SK-N-SH (cell line): ENCODE measurements at regions of chr7 and their contacts with region 1.

Region 1: GRCh38 chr7:157228864-157229422 is 90.2 kb downstream of the UBE3C start:
- DNase-seq: peak; percentile 53
- H3K4me3 ChIP-seq: no peak overlapping the region
- H3K27ac ChIP-seq: no peak overlapping the region
- H3K4me1 ChIP-seq: peaks cover 0 to 6% of the 10 kb centered on the region in 2 experiments; a peak in 2 of 4 replicates
- H3K27me3 ChIP-seq: no peaks in the 10 kb centered on the region
- CTCF ChIP-seq: peak; percentile 57
- EP300 ChIP-seq: no peak
- RAD21 ChIP-seq: peak; percentile 66

Region 2: GRCh38 chr7:156892821-156893706 is 335.9 kb before region 1 on chr7 and contains the start of gene LMBR1:
- CTCF ChIA-PET with region 1: no interaction called
- POLR2A ChIA-PET with region 1: no interaction called
- DNase-seq: peak; percentile 100
- H3K4me3 ChIP-seq: peak within 1 kb of the TSS; percentile 82 to 98
- H3K27ac ChIP-seq: peak within 1 kb of the TSS; percentile 61 to 87
- H3K4me1 ChIP-seq: peaks cover 6 to 9% of the 10 kb centered on the region in 2 experiments; a peak in 3 of 4 replicates
- H3K27me3 ChIP-seq: no peaks in the 10 kb centered on the region
- CTCF ChIP-seq: peak; percentile 64
- EP300 ChIP-seq: no peak
- RAD21 ChIP-seq: no peak
- polyA plus RNA-seq, gene LMBR1: 20.0 and 24.6 TPM in 2 replicates

Region 3: GRCh38 chr7:156964971-156965370 is 264.0 kb before region 1 on chr7:
- CTCF ChIA-PET with region 1: interaction called, 50 read pairs
- POLR2A ChIA-PET with region 1: no interaction called
- DNase-seq: no peak
- H3K4me3 ChIP-seq: no peak overlapping the region
- H3K27ac ChIP-seq: no peak overlapping the region
- H3K4me1 ChIP-seq: no peaks in the 10 kb centered on the region
- H3K27me3 ChIP-seq: no peaks in the 10 kb centered on the region
- CTCF ChIP-seq: no peak
- EP300 ChIP-seq: no peak
- RAD21 ChIP-seq: no peak

Region 4: DNA sequence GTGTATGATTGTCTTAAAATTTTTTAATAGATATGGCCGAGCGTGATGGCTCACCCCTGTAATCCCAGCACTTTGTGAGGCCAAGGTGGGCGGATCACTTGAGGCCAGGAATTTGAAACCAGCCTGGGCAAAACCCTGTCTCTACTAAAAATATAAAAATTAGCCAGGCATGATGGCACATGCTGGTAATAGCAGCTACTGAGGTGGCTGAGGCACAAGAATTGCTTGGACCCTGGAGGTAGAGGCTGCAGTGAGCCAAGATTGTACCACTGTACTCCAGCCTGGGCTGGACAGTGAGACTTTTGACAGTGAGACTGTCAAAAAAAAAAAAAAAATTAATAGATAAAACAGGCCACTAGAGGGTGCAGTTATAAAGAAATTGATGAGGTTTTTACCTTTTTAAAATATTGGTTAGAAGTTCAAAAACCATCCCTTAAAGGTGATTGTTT is 258.9 kb before region 1 on chr7:
- CTCF ChIA-PET with region 1: interaction called, 50 read pairs
- POLR2A ChIA-PET with region 1: no interaction called
- DNase-seq: no peak
- H3K4me3 ChIP-seq: no peak overlapping the region
- H3K27ac ChIP-seq: no peak overlapping the region
- H3K4me1 ChIP-seq: no peaks in the 10 kb centered on the region
- H3K27me3 ChIP-seq: no peaks in the 10 kb centered on the region
- CTCF ChIP-seq: peak; percentile 74
- EP300 ChIP-seq: no peak
- RAD21 ChIP-seq: peak; percentile 56

Region 5: GRCh38 chr7:157211690-157212089 is 17.3 kb before region 1 on chr7:
- CTCF ChIA-PET with region 1: interaction called, 18 read pairs
- POLR2A ChIA-PET with region 1: no interaction called
- DNase-seq: no peak
- H3K4me3 ChIP-seq: no peak overlapping the region
- H3K27ac ChIP-seq: no peak overlapping the region
- H3K4me1 ChIP-seq: peaks cover 0 to 4% of the 10 kb centered on the region in 2 experiments; a peak in 1 of 4 replicates
- H3K27me3 ChIP-seq: no peaks in the 10 kb centered on the region
- CTCF ChIP-seq: no peak
- EP300 ChIP-seq: no peak
- RAD21 ChIP-seq: no peak

Region 6: GRCh38 chr7:157250605-157251228 is 21.8 kb after region 1 on chr7:
- CTCF ChIA-PET with region 1: interaction called, 160 read pairs
- POLR2A ChIA-PET with region 1: no interaction called
- DNase-seq: peak; percentile 78
- H3K4me3 ChIP-seq: no peak overlapping the region
- H3K27ac ChIP-seq: no peak overlapping the region
- H3K4me1 ChIP-seq: no peaks in the 10 kb centered on the region; a peak in 2 of 4 replicates
- H3K27me3 ChIP-seq: no peaks in the 10 kb centered on the region
- CTCF ChIP-seq: peak; percentile 99
- EP300 ChIP-seq: no peak
- RAD21 ChIP-seq: peak; percentile 68